A549 (cell line): ENCODE measurements at regions of chr1 and their contacts with region 1.

Region 1: GRCh38 chr1:169546087-169546995 is 39.9 kb downstream of the F5 start:
- DNase-seq: peak in 1 of 2 experiments; percentile 74
- ATAC-seq: peak; percentile 78 to 91
- H3K4me3 ChIP-seq: no peak overlapping the region
- H3K27ac ChIP-seq: no peak overlapping the region
- H3K4me1 ChIP-seq: no peaks in the 10 kb centered on the region
- CTCF ChIP-seq: peak; percentile 82
- EP300 ChIP-seq: no peak
- POLR2A ChIP-seq: no peak
- RAD21 ChIP-seq: peak; percentile 83 to 86

Region 2: DNA sequence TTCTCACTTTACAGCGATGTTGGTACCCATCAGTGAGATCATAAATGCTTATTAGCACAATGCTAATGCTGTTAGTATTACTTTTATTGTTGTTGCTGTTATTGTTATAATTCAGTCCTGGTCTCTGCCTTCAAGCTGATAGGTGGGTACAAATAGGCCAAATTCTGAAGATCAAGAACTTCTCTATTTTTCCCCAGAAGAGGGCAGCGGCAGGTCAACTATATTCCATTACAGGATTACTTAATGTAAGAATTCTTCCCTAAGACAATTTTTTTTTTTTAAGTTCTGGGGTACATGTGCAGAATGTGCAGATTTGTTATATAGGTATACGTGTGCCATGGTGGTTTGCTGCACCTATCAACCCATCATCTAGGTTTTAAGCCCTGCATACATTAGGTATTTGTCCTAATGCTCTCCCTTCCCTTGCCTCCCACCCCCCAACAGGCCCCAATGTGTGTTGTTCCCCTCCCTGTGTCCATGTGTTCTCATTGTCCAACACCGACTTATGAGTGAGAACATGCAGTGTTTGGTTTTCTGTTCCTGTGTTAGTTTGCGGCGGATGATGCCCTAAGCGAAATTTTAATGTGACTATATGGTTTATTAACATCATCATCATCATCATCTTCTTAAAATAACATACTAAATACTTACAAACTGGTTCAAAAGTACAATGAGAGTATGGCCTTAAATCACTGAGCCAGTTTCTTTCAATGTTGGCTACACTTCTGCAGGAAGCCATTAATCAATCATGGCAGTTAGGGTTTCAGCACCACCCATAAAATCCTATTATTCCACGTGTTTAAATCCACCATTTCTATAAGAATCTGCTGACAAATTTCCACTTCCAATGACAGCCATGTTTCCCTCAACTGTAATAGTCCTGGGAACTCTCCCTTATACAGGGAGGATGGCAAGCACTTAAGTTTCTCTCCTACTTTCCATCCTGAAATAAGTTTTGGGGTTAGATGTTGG is 79.8 kb before region 1 on chr1:
- CTCF ChIA-PET with region 1: interaction called, 31 read pairs
- POLR2A ChIA-PET with region 1: interaction called, 3 read pairs
- DNase-seq: peak; percentile 11 to 44
- ATAC-seq: peak; percentile 76 to 80
- H3K4me3 ChIP-seq: no peak overlapping the region
- H3K27ac ChIP-seq: no peak overlapping the region
- H3K4me1 ChIP-seq: no peaks in the 10 kb centered on the region
- CTCF ChIP-seq: peak; percentile 59
- EP300 ChIP-seq: no peak
- POLR2A ChIP-seq: no peak
- RAD21 ChIP-seq: peak; percentile 57 to 68

Region 3: DNA sequence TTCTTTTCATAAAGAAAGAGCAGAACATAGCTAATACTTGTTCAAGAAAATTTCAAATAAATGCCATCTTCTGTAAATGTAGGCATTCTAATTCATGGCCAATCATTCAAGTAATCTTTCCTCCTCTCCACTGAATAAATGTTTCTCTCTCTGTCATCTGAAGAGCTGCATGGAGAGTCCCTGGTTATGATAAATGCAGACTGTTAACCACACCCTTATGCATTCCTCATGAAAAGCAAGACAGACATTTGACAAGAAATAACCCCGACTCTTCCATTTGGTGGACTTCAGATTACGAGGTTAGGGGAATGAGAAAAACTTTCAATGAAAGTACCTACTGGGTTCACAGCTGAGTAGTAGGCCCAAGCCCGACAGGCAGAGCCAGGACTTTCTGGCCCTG is 15.9 kb before region 1 on chr1:
- CTCF ChIA-PET with region 1: interaction called, 16 read pairs
- POLR2A ChIA-PET with region 1: no interaction called
- DNase-seq: no peak
- ATAC-seq: no peak
- H3K4me3 ChIP-seq: no peak overlapping the region
- H3K27ac ChIP-seq: no peak overlapping the region
- H3K4me1 ChIP-seq: peaks cover 8% of the 10 kb centered on the region
- CTCF ChIP-seq: no peak
- EP300 ChIP-seq: no peak
- POLR2A ChIP-seq: no peak
- RAD21 ChIP-seq: no peak

Region 4: DNA sequence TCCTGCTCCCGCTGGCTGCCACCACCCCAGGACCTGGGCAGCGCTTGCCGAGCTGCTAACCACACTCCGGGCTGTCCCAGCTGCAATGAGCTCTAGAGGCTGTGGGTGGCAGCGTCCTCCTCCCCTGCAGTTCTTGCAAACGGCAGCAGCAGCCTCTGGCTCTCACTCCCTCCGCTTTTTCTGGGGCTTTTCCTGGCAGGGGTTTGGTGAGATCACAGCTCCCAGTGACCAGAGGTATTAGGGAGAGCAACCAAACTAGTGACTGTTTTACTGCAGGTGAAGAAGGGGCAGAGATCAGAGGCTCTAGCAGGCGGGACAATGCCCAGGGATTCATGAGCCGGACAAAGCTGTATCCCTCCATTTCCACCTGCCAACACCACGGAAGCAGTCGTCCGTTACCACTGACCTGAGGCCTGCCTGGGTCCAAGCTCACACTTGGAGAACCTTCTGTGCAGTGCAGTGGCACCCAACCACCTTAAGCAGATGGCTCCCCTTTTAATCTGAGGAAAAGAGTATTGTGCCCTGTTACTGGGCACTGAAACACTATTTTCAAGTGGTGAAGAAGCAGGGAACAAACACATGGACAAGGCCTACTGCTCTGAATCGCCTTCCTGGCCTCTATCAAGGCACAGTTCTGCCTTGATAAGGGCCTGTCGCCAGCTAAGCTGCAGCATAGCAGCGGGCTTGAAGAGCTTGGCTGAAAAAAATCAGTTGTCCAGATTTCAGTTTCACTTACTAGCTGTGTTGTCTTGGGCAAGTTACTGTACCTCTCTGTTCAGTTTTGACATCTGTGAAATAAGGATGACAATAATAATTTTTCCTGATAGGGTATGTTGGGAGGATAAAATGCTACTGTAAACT is 40.3 kb after region 1 on chr1 and contains the start of gene F5:
- CTCF ChIA-PET with region 1: interaction called, 10 read pairs
- POLR2A ChIA-PET with region 1: no interaction called
- DNase-seq: peak; percentile 72 to 73
- ATAC-seq: peak; percentile 100
- H3K4me3 ChIP-seq: peak within 1 kb of the TSS; percentile 18; the same call in 2 of the 3 replicates
- H3K27ac ChIP-seq: no peak within 1 kb of the TSS
- H3K4me1 ChIP-seq: no peaks in the 10 kb centered on the region; the same call in 2 of the 3 replicates
- CTCF ChIP-seq: peak; percentile 26; the same call in 2 of the 3 replicates
- EP300 ChIP-seq: no peak
- POLR2A ChIP-seq: no peak
- RAD21 ChIP-seq: peak; percentile 34 to 55; a peak in 2 of 5 replicates
- polyA plus RNA-seq, gene F5: 0.36 and 1.4 TPM in 2 replicates

Region 5: GRCh38 chr1:169809370-169810095 is 263.2 kb after region 1 on chr1:
- CTCF ChIA-PET with region 1: interaction called, 45 read pairs
- POLR2A ChIA-PET with region 1: no interaction called
- DNase-seq: peak; percentile 16 to 43
- ATAC-seq: peak; percentile 59 to 82; a peak in 5 of 6 replicates
- H3K4me3 ChIP-seq: no peak overlapping the region
- H3K27ac ChIP-seq: no peak overlapping the region
- H3K4me1 ChIP-seq: no peaks in the 10 kb centered on the region
- CTCF ChIP-seq: peak; percentile 75
- EP300 ChIP-seq: no peak
- POLR2A ChIP-seq: no peak
- RAD21 ChIP-seq: peak; percentile 65 to 69